CD14-positive monocyte (primary cell): ENCODE measurements at regions of chr6 and their contacts with region 1.

Region 1: DNA sequence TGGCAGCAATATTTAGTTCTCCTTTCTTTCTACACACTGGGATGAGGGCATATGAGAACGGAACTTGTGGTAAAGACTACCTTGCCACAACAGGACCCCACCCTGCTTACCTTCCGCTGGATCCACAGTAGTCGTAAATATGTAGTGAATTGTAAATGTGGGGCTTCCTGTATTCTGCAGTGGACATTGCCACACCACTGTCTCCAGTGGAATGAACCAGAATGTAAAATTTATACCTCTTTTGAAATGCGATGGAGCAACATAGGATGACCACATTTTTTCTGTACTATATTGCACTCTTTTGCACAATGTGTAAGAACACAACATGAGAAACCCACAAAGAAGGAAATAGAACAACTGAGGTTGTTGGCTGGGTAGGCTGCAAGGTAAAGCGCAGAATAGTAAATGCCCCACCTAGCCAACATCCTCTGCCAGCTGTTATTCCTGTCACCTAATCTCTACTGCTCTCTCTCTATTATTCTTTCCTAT is 16.1 kb upstream of the RIPOR2 start:
- DNase-seq: peak; percentile 92 to 97 (median 94)
- H3K4me3 ChIP-seq: peak overlapping the region in 1 of 3 experiments; percentile 60
- H3K4me3 Mint-ChIP-seq: peak overlapping the region; percentile 55 to 80
- H3K27ac ChIP-seq: peak overlapping the region; percentile 62 to 87
- H3K27ac Mint-ChIP-seq: peak overlapping the region; percentile 86 to 99 (median 96)
- H3K4me1 ChIP-seq: peaks cover 65 to 77% of the 10 kb centered on the region in 2 donors
- H3K4me1 Mint-ChIP-seq: peaks cover 83% of the 10 kb centered on the region
- H3K27me3 ChIP-seq: no peaks in the 10 kb centered on the region
- H3K27me3 Mint-ChIP-seq: no peaks in the 10 kb centered on the region
- CTCF ChIP-seq: no peak

Region 2: DNA sequence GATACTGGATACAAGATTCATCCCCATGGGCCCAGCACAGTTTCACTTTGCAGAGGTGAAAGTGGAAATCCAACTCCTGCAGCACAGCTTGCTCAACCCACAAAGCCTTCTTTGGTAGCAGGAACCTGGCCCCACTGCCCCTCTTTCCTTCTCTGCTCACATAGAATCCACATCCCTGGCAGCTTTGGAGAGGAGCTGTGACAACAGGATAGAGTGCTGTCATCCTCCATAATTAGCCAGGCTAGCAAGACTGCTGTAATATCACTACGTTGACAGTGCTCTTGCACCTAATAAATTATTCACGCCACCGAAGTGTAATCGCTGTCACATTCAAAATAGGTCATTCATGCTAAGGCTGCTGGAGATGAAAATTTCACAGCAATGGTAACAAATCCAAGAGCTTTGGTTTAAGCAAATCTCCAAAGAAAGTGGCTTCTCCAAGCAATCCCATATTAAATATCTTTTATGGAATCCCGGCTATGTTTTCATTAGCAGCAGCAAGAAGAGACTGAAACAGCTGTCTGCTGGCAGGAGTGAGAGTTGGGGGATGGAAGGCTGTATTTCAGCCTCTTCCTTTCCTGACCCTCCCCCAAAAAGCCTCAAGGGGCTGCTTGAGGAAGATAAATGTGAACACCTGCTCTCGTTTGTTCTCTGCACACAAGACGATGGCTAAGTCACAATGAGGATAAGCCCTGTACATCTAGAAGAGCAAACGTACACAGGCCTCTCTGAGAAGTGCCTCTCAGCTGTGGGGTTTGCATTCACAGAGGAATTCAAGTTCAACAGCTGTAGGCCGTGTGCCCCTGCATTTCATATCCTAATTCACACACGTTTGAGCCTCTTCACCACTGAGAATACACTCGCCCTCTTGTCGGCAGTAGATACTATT is 32.6 kb before region 1 on chr6:
- intact Hi-C with region 1: loop called in 1 of 2 experiments (anchors 5 kb)
- DNase-seq: no peak
- H3K4me3 ChIP-seq: peak overlapping the region in 1 of 3 experiments; percentile 6
- H3K4me3 Mint-ChIP-seq: peak overlapping the region; percentile 34 to 57
- H3K27ac ChIP-seq: peak overlapping the region; percentile 30 to 69
- H3K27ac Mint-ChIP-seq: peak overlapping the region; percentile 44 to 86 (median 82)
- H3K4me1 ChIP-seq: peaks cover 60 to 71% of the 10 kb centered on the region in 2 donors
- H3K4me1 Mint-ChIP-seq: peaks cover 88% of the 10 kb centered on the region
- H3K27me3 ChIP-seq: no peaks in the 10 kb centered on the region
- H3K27me3 Mint-ChIP-seq: peaks cover 0 to 4% (median 0%) of the 10 kb centered on the region in 3 donors
- CTCF ChIP-seq: no peak

Region 3: DNA sequence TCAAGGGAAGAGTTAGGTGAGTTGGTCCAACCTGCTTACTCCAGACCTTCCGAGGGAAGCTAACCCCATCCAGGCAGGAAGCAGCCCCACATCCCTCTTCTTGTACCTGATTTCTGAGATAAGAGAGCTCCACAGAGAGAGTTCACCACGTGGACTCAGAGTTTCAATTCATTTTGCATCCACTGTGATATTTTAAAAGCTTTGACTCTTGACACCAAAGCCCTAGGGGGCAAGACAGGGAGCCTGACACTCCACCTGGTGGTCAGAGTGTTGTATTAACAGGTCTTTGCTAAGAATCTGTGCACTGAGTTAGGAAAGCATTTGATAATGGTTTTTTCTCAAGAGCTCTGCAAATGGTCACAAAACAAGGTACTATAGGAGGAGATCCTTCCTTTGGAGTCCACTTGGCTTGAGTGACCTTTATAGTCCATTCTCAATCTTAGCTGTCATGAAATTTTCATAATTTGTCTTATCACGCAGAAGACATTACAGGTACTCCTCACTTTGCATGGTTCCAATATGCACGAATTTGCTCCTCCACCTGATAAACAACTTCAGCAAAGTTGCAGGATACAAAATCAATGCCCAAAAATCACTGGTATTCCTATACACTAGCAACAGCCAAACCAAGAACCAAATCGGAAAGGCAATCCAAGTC is 40.1 kb after region 1 on chr6:
- intact Hi-C with region 1: loop called in 1 of 2 experiments (anchors 5 kb)
- DNase-seq: peak; percentile 69 to 80 (median 73)
- H3K4me3 ChIP-seq: no peak overlapping the region
- H3K4me3 Mint-ChIP-seq: peak overlapping the region in 1 of 2 donors; percentile 42
- H3K27ac ChIP-seq: peak overlapping the region in 1 of 2 donors; percentile 62
- H3K27ac Mint-ChIP-seq: peak overlapping the region in 6 of 7 donors; percentile 65 to 87 (median 72)
- H3K4me1 ChIP-seq: peaks cover 37 to 45% of the 10 kb centered on the region in 2 donors
- H3K4me1 Mint-ChIP-seq: peaks cover 44% of the 10 kb centered on the region
- H3K27me3 ChIP-seq: no peaks in the 10 kb centered on the region
- H3K27me3 Mint-ChIP-seq: no peaks in the 10 kb centered on the region
- CTCF ChIP-seq: peak; percentile 88